MCF 10A (cell line): ENCODE measurements at regions of chr1 and their contacts with region 1.

Region 1: GRCh38 chr1:233904633-233905415 is at the start of gene SLC35F3:
- DNase-seq: peak; percentile 87
- H3K4me3 Mint-ChIP-seq: peak within 1 kb of the TSS; percentile 78
- H3K27ac Mint-ChIP-seq: peak within 1 kb of the TSS; percentile 9
- H3K4me1 Mint-ChIP-seq: peaks cover 22% of the 10 kb centered on the region
- H3K27me3 Mint-ChIP-seq: peaks cover 11% of the 10 kb centered on the region
- CTCF ChIP-seq: peak; percentile 91
- total RNA-seq, gene SLC35F3: 2.9 and 3.3 TPM in 2 replicates

Region 2: DNA sequence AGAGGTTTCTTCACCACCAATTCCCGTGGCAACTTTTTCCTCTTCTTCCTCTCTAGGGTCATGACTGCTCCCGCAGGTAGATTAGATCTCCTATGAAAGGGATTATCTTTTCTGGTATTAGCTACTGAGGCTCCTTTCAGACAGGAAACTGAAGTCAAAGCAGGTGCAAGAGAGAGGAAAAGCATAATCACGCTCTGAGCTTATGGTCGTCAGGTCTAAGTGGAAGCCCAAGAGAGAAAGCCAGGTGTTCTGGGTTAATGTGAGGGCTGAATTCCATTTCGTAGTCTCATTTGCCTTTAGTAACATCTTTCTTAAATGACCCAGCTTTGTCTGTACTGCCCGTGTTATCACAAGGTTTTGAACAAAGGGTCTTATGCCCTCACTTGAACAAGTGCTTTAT is 585.6 kb before region 1 on chr1:
- CTCF ChIA-PET with region 1: no interaction called
- POLR2A ChIA-PET with region 1: interaction called, 3 read pairs
- intact Hi-C with region 1: loop called (anchors 10 kb)
- DNase-seq: no peak
- H3K4me3 Mint-ChIP-seq: no peak overlapping the region
- H3K27ac Mint-ChIP-seq: no peak overlapping the region
- H3K4me1 Mint-ChIP-seq: no peaks in the 10 kb centered on the region
- H3K27me3 Mint-ChIP-seq: peaks cover 29% of the 10 kb centered on the region
- CTCF ChIP-seq: no peak

Region 3: DNA sequence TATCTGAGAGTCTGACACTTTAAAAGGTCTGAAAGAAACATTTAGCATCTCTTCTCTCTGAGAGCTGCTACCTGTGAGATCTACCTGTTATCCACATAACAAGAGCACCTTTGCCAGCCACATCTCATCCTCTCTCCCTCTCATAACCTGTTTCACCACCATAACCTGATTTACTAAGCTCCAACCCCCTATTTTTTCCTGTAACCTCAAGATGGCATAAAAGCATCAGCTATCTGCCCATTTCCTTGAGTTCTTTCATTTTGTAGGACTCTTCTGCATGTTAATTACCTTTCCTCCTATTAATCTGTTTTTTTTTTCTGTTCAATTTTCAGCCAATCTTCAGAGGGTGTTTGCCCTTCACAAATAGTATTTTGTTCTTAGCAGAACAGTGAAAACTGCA is 427.5 kb before region 1 on chr1:
- CTCF ChIA-PET with region 1: no interaction called
- POLR2A ChIA-PET with region 1: no interaction called
- intact Hi-C with region 1: no loop called
- DNase-seq: peak; percentile 23
- H3K4me3 Mint-ChIP-seq: no peak overlapping the region
- H3K27ac Mint-ChIP-seq: no peak overlapping the region
- H3K4me1 Mint-ChIP-seq: peaks cover 31% of the 10 kb centered on the region
- H3K27me3 Mint-ChIP-seq: no peaks in the 10 kb centered on the region
- CTCF ChIP-seq: peak; percentile 30

Region 4: GRCh38 chr1:233613252-233614174 is 291.3 kb before region 1 on chr1 and contains the start of gene KCNK1:
- CTCF ChIA-PET with region 1: interaction called, 5 read pairs
- POLR2A ChIA-PET with region 1: interaction called, 4 read pairs
- intact Hi-C with region 1: loop called (anchors 5 kb)
- DNase-seq: peak; percentile 97
- H3K4me3 Mint-ChIP-seq: peak within 1 kb of the TSS; percentile 88
- H3K27ac Mint-ChIP-seq: peak within 1 kb of the TSS; percentile 96
- H3K4me1 Mint-ChIP-seq: peaks cover 23% of the 10 kb centered on the region
- H3K27me3 Mint-ChIP-seq: peaks cover 12% of the 10 kb centered on the region
- CTCF ChIP-seq: no peak
- total RNA-seq, gene KCNK1: 24.3 and 41.3 TPM in 2 replicates

Region 5: DNA sequence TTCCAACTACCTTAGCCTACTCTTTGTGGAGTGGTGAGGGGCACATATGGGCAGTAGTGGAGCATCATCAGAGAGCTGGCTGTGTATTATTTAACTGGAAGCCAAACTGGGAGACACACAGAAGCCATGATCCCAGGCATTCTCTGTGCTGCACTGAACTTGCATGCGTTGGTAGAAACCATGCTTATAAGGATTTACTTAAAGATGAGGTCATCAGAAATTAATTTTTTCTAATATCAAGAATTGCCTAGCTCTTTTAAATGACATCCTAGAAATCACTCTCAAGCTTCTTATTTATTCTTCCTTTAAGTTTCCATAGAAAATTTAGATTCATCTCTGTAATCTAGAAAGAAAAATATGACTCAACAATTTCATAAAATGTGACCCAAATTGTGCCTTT is 154.7 kb before region 1 on chr1:
- CTCF ChIA-PET with region 1: no interaction called
- POLR2A ChIA-PET with region 1: no interaction called
- intact Hi-C with region 1: no loop called
- DNase-seq: no peak
- H3K4me3 Mint-ChIP-seq: no peak overlapping the region
- H3K27ac Mint-ChIP-seq: no peak overlapping the region
- H3K4me1 Mint-ChIP-seq: no peaks in the 10 kb centered on the region
- H3K27me3 Mint-ChIP-seq: peaks cover 46% of the 10 kb centered on the region
- CTCF ChIP-seq: no peak

Region 6: DNA sequence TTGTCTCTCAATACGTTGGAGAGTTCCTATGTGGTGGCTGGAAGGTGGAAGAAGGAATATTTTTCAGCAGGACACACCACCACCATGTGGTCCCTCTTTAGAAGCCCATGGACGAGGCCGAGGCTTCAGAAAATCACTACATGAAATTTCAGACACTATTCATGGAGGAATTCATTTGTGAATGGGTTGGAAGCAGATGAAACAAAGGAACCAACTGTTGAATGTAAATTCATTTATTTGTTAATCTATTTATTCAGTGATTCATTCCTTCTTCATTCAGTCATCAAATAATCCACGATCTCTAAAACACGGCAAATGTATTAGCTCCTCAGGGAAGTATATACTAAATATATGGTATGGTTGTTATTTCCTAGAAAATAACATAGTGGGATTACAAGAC is 11.9 kb after region 1 on chr1:
- CTCF ChIA-PET with region 1: interaction called, 13 read pairs
- POLR2A ChIA-PET with region 1: interaction called, 6 read pairs
- intact Hi-C with region 1: no loop called
- DNase-seq: peak; percentile 36
- H3K4me3 Mint-ChIP-seq: no peak overlapping the region
- H3K27ac Mint-ChIP-seq: no peak overlapping the region
- H3K4me1 Mint-ChIP-seq: peaks cover 13% of the 10 kb centered on the region
- H3K27me3 Mint-ChIP-seq: no peaks in the 10 kb centered on the region
- CTCF ChIP-seq: no peak

Region 7: DNA sequence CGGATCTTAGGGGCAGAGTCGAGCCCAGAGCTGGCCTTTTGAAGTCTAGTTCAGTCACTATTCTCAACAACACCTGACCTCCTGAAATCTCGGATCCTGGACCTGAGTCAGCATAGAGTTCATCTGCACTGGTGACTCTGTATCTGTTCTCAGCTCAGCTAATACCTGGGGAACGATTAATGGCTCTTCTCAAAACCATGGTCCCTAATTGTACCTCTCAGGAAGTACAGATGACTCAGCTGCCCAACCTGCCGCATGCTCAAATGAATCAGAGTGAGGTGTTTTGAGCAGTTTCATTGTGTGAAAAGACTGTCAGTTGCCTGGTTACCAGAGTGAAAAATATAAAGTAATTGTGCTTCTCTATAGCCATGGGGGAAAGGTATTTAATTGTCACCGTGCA is 88.8 kb after region 1 on chr1:
- CTCF ChIA-PET with region 1: interaction called, 3 read pairs
- POLR2A ChIA-PET with region 1: interaction called, 4 read pairs
- intact Hi-C with region 1: loop called (anchors 2 kb)
- DNase-seq: peak; percentile 87
- H3K4me3 Mint-ChIP-seq: no peak overlapping the region
- H3K27ac Mint-ChIP-seq: peak overlapping the region; percentile 80
- H3K4me1 Mint-ChIP-seq: peaks cover 9% of the 10 kb centered on the region
- H3K27me3 Mint-ChIP-seq: no peaks in the 10 kb centered on the region
- CTCF ChIP-seq: no peak